ENCODE measurements at regions of chr2 and their contacts with region 1.

Region 1: GRCh38 chr2:75640621-75641121 is 5.9 kb upstream of the MRPL19 start:
- DNase-seq: peak; percentile 61 to 80
- ATAC-seq: peak; percentile 89 to 95 (median 90)
- H3K4me3 ChIP-seq: no peak overlapping the region
- H3K27ac ChIP-seq: peak overlapping the region; percentile 83
- H3K4me1 ChIP-seq: peaks cover 31% of the 10 kb centered on the region
- H3K27me3 ChIP-seq: no peaks in the 10 kb centered on the region
- CTCF ChIP-seq: peak; percentile 99

Region 2: DNA sequence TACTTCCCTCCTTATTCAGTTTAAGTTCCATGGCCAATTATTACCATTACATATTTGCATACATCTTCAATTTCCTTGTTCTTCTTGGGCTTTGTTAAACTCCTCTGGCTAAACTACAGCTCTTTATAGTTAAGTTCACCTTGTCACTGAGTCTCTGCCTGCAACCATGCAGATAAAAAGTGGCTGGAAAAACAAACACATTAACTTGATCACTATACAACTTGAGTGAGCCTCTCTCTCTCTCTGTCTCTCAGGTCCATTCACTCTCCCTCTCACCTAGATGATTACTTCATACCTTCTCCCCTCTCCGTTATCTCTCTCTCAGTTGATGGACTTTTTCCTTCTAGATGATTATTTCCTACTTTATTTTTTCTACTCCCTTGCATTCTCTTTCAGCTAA is 39.7 kb after region 1 on chr2:
- intact Hi-C with region 1: loop called (anchors 1 to 5 kb)
- DNase-seq: no peak
- ATAC-seq: no peak
- H3K4me3 ChIP-seq: no peak overlapping the region
- H3K27ac ChIP-seq: no peak overlapping the region
- H3K4me1 ChIP-seq: peaks cover 19% of the 10 kb centered on the region
- H3K27me3 ChIP-seq: no peaks in the 10 kb centered on the region
- CTCF ChIP-seq: no peak